ENCODE measurements at regions of chr13 and their contacts with region 1.

Region 1: GRCh38 chr13:65188721-65189120 is 2041.4 kb downstream of the PCDH9 start:
- DNase-seq: no peak

Region 2: GRCh38 chr13:65168026-65168425 is 20.7 kb before region 1 on chr13:
- intact Hi-C with region 1: loop called in 1 of 2 experiments (anchors 1 kb)
- DNase-seq: no peak

Measured in posterior vena cava (tissue), 2 donors.